Mammary epithelial cell (primary cell): ENCODE measurements at regions of chr20 and their contacts with region 1.

Region 1: DNA sequence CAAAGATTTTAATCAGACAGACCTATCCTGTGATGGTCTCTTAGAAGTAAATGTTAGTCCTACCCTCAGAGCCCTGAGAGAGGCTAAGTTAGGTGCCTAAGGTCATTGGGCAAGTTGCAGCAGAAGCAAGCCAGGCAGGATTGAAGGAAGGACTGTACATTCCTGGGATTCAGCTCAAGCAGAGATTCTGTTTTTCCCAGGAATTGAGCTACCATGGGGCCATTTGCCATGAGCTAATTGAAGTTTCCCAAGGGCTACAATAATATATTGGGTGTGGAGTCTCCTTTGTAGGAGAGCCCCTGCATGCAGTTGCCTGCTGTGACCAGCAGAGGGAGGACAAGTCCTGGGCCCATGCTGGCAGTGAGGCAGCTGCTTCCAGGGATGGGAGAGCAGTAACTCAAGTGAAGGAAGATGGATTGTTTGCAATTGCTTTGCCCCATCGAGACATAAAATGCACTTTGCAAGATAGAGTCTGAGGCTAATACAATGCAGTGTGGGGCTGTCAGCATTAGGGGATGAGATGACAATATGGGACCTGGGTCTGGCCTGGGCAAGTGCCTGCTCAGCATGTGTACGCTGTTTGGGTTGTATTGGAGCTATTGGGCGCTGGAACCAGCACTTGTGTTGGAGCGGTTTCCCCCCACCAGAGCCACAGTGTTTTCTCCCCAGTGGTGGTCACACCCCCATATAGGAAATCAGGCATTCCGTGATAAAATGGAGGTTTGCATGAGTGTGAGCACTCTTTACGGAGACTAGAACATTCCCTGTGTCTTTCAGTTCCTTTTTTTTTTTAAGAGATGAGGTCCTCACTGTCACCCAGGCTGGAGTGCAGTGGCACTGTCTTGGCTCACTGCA is 27.9 kb downstream of the DNMT3B start:
- DNase-seq: peak; percentile 50
- H3K4me3 ChIP-seq: no peak overlapping the region
- H3K27ac ChIP-seq: no peak overlapping the region
- H3K4me1 ChIP-seq: peaks cover 24% of the 10 kb centered on the region
- H3K27me3 ChIP-seq: no peaks in the 10 kb centered on the region
- CTCF ChIP-seq: peak; percentile 99 to 100

Region 2: GRCh38 chr20:32819992-32820710 is 30.0 kb after region 1 on chr20:
- CTCF ChIA-PET with region 1: interaction called, 17 read pairs
- dilution Hi-C with region 1: no loop called
- in situ Hi-C with region 1: no loop called
- intact Hi-C with region 1: loop called (anchors 1 kb)
- DNase-seq: no peak
- H3K4me3 ChIP-seq: peak overlapping the region; percentile 43 to 76 (median 76)
- H3K27ac ChIP-seq: peak overlapping the region; percentile 72
- H3K4me1 ChIP-seq: peaks cover 35% of the 10 kb centered on the region
- H3K27me3 ChIP-seq: no peaks in the 10 kb centered on the region
- CTCF ChIP-seq: no peak

Region 3: GRCh38 chr20:32858701-32859372 is 68.7 kb after region 1 on chr20 and contains the start of gene EFCAB8:
- CTCF ChIA-PET with region 1: no interaction called
- dilution Hi-C with region 1: no loop called
- in situ Hi-C with region 1: no loop called
- intact Hi-C with region 1: loop called (anchors 2 kb)
- DNase-seq: no peak
- H3K4me3 ChIP-seq: no peak within 1 kb of the TSS
- H3K27ac ChIP-seq: peak within 1 kb of the TSS; percentile 8
- H3K4me1 ChIP-seq: peaks cover 7% of the 10 kb centered on the region
- H3K27me3 ChIP-seq: no peaks in the 10 kb centered on the region
- CTCF ChIP-seq: no peak
- total RNA-seq, gene EFCAB8: 0.47 to 0.50 TPM

Region 4: DNA sequence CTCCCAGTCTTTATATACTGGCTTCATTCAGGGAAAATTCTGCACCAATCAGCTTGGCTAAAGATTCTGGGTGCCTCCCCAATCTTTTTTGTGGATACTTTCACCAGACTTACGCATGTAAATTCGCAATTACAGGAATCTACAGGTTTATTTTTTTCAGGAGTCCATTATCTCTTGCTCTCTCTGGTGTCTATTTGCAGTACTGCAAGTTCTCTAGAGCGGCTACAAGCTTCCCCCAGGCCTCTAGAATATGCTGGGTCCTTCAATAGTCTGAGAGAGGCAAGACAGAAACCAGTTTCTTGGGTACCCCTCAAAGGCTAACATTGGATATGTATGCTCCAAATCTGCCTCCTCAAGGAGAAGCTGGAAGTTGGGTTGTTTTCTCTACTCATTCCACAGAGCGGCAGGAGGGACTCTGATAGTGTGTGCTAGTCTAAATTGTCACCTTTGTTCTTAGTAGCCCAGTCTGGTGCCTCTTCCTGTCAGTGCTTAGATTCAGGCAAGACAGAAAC is 155.6 kb after region 1 on chr20:
- CTCF ChIA-PET with region 1: no interaction called
- dilution Hi-C with region 1: no loop called
- in situ Hi-C with region 1: loop called (anchors 10 to 25 kb)
- intact Hi-C with region 1: loop called (anchors 1 kb)
- DNase-seq: peak; percentile 4
- H3K4me3 ChIP-seq: no peak overlapping the region
- H3K27ac ChIP-seq: no peak overlapping the region
- H3K4me1 ChIP-seq: no peaks in the 10 kb centered on the region
- H3K27me3 ChIP-seq: no peaks in the 10 kb centered on the region
- CTCF ChIP-seq: peak; percentile 43 to 73

Region 5: DNA sequence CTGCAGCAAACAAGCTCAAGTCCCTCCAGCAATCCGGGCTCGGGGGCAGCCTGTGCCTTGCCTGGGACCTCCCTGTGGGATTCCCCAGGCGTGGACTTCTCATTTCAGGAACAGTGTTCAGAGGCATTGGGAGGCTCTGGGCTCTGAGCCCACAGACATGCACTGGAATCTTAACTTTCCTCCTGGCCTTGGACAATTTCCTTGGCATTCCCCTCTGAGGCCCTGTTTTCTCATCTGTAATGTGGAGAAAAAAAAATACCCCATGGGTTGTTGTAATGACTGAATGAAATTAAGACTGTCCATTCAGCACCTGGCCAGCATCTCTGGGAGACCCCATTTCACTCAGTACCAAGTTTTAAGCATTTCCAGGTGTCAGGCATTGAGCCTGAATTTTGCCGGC is 306.9 kb after region 1 on chr20:
- CTCF ChIA-PET with region 1: no interaction called
- dilution Hi-C with region 1: no loop called
- in situ Hi-C with region 1: loop called in 1 of 2 experiments (anchors 25 kb)
- intact Hi-C with region 1: loop called (anchors 1 kb)
- DNase-seq: no peak
- H3K4me3 ChIP-seq: no peak overlapping the region
- H3K27ac ChIP-seq: no peak overlapping the region
- H3K4me1 ChIP-seq: no peaks in the 10 kb centered on the region
- H3K27me3 ChIP-seq: no peaks in the 10 kb centered on the region
- CTCF ChIP-seq: no peak

Region 6: DNA sequence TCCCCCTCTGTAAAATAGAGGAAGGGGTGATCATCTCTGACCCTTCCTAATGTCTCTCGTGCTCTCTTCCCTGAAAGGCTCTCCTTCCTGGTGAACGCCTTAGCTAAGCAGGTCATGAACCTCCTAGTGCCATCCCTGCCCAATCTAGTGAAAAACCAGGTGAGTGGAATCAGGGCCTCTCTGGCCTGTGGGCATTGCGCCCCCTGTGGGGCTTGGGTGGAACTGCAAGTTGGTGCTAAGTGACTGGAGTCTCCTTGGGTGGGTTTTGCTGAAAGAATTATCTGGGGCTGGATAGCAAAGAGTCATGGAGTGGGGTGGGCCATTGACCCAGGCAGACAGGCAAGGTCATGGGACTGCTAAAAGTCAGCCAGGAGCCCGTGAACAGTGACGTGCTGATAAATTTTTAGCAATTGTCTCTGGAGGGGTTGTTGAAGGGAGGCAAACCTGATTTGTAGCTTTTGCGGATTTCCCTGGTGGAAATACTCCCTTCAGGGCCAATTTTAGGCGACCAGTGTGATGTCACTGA is 501.8 kb after region 1 on chr20:
- CTCF ChIA-PET with region 1: no interaction called
- dilution Hi-C with region 1: no loop called
- in situ Hi-C with region 1: no loop called
- intact Hi-C with region 1: loop called (anchors 1 kb)
- DNase-seq: peak; percentile 17
- H3K4me3 ChIP-seq: no peak overlapping the region
- H3K27ac ChIP-seq: no peak overlapping the region
- H3K4me1 ChIP-seq: no peaks in the 10 kb centered on the region
- H3K27me3 ChIP-seq: no peaks in the 10 kb centered on the region
- CTCF ChIP-seq: peak; percentile 94 to 99